ENCODE measurements at regions of chrX and their contacts with region 1.

Region 1: DNA sequence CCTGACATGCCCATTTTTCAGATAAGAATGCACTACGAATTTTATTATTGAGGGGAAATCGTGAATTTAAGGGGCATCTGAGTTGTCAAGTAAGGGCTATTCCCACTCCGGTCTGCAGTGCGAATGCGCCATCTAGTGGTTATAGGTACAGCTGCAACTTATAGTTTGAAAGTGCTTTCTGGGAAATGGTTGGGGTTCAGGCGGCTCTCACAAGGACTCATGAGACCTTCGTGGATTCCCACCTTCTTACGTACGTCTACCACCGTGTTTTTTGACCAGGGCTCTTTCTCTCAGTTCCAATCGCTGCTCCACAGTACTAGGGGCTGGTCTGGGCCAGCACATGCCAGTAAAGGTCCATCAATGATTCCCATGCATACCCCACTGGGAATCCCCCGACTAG is 12.3 kb downstream of the MSL3 start:
- DNase-seq: no peak
- H3K4me3 ChIP-seq: no peak overlapping the region
- H3K27ac ChIP-seq: no peak overlapping the region
- H3K4me1 ChIP-seq: no peaks in the 10 kb centered on the region
- H3K27me3 ChIP-seq: no peaks in the 10 kb centered on the region
- CTCF ChIP-seq: peak; percentile 55 to 82 (median 74)

Region 2: GRCh38 chrX:11143931-11144678 is 626.2 kb before region 1 on chrX:
- intact Hi-C with region 1: loop called (anchors 1 kb)
- DNase-seq: peak in 1 of 2 donors; percentile 76
- H3K4me3 ChIP-seq: no peak overlapping the region
- H3K27ac ChIP-seq: no peak overlapping the region
- H3K4me1 ChIP-seq: no peaks in the 10 kb centered on the region
- H3K27me3 ChIP-seq: no peaks in the 10 kb centered on the region
- CTCF ChIP-seq: peak; percentile 51 to 66 (median 59)

Region 3: DNA sequence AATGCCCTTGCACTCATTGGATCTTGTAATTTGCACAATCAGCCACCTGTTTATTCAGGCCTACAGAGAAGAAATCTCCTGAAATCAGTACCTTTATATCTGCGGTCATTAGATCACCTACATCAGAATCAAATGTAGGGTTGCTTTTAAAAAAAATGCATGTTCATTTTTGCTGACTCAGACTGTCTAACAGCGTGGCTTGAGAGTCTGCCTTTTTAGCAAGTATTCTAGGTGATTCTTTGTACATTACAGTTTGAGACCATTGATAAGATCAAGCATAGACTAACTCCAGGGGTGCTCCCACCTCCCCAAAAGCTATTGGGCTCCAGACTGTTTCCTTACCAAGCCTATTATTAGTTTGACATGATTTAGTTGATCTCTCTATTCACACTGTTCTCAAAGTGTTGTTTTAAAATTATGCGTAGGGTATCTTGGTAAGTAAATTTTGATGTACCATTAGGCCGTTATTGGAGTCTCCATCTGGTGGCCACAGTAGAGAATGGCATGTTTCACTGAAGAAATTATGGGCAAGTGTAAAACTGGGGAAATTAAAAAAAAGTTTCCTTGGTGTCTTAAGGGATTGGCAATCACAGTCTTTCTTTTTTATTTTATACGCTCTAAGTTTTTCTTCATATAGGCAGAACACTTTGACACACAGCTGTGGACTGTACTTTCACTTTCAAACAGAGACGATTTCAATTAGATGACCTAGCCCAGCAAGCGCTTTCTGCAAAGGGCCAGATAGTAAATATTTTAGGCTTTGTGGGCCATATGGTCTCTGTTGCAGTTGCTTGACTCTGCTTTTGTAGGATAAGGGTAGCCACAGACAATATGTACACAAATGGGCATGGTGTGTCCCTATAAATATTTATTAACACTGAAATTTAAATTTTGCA is 46.0 kb before region 1 on chrX:
- intact Hi-C with region 1: loop called (anchors 1 kb)
- DNase-seq: no peak
- H3K4me3 ChIP-seq: no peak overlapping the region
- H3K27ac ChIP-seq: no peak overlapping the region
- H3K4me1 ChIP-seq: no peaks in the 10 kb centered on the region
- H3K27me3 ChIP-seq: no peaks in the 10 kb centered on the region
- CTCF ChIP-seq: peak; percentile 44 to 68 (median 64)